Activated CD4-positive, alpha-beta T cell treated with anti-CD3 and anti-CD28 coated beads, Interleukin-2, amount 10 ng/mL, durations not matched to agents 24 days and 14 days (primary cell): ENCODE measurements at regions of chr12 and their contacts with region 1.

Region 1: GRCh38 chr12:121657305-121658008 is 12.0 kb downstream of the MORN3 start:
- DNase-seq: peak; percentile 71
- H3K4me3 Mint-ChIP-seq: peak overlapping the region; percentile 45
- H3K27ac Mint-ChIP-seq: peak overlapping the region; percentile 48
- H3K4me1 Mint-ChIP-seq: peaks cover 57% of the 10 kb centered on the region
- H3K27me3 Mint-ChIP-seq: no peaks in the 10 kb centered on the region

Region 2: GRCh38 chr12:121550974-121551634 is 106.4 kb before region 1 on chr12:
- intact Hi-C with region 1: no loop called
- DNase-seq: no peak
- H3K4me3 Mint-ChIP-seq: no peak overlapping the region
- H3K27ac Mint-ChIP-seq: no peak overlapping the region
- H3K4me1 Mint-ChIP-seq: peaks cover 4% of the 10 kb centered on the region
- H3K27me3 Mint-ChIP-seq: no peaks in the 10 kb centered on the region

Region 3: DNA sequence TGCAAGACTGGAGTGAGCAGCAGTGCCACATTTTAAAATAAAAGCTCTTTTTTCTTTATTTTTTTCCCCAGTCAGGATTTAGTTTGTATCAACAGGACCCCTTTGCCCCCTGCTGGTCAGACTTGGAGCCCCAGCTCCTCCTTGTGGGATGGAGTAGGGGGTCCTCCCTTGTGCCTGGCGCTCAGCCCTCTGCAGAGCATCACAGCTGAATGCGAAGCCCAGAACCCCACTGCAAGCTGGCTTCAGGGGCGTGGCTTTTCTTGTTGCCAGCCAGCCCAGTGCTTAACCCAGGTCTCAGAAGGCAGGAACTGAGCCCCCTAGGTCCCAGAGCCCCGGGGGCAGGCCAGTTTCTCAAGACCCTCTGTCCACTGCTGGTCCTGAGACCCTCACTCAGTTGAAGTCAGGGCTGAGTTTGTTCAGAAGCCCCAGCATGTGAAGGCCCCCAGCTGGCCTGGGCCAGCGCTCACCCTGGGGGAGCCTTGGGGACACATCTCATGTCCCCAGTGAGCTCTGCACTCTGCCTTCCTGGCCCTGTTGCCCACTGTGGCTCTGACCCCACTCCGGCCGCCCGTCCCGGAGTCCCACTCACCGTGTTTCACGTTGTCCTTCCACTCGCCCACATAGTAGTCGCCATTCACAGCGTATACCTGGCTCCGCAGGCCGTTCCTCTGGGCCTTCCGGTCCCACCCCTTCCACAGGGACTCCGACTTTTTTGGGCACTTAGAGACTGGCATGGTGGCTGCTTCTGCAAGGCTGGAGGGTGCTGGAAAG is 11.5 kb after region 1 on chr12:
- intact Hi-C with region 1: loop called (anchors 1 kb)
- DNase-seq: peak; percentile 85
- H3K4me3 Mint-ChIP-seq: no peak overlapping the region
- H3K27ac Mint-ChIP-seq: peak overlapping the region; percentile 11
- H3K4me1 Mint-ChIP-seq: peaks cover 43% of the 10 kb centered on the region
- H3K27me3 Mint-ChIP-seq: no peaks in the 10 kb centered on the region